Heart right ventricle (tissue), 16 donors: ENCODE measurements at regions of chr10 and their contacts with region 1.

Region 1: DNA sequence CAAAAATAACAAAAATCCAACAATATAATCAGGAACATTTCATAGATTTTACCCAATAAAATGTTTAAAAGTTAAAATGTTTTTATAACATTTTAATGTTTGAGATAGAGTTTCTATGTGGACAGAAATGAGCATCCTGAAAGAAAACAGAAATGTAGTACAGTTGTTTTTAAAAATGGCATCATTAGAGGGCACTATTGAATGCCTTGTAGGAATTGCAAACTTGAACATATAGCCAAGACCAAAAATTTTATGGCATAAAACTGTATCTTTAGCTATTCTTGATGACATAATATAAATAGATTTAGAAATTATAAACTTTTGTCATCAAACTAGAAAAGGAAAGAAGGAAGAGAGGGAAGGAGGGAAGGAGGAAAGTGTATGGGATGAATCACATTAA is 1372.7 kb downstream of the GATA3 start:
- DNase-seq: no peak
- ATAC-seq: no peak
- H3K4me3 ChIP-seq: no peak overlapping the region
- H3K27ac ChIP-seq: no peak overlapping the region
- H3K4me1 ChIP-seq: no peaks in the 10 kb centered on the region
- H3K27me3 ChIP-seq: no peaks in the 10 kb centered on the region
- CTCF ChIP-seq: peak in 3 of 9 donors; percentile 6 to 38 (median 25)

Region 2: GRCh38 chr10:9416331-9416730 is 10.9 kb before region 1 on chr10:
- intact Hi-C with region 1: loop called in 1 of 10 experiments (anchors 1 kb)
- DNase-seq: no peak
- ATAC-seq: no peak
- H3K4me3 ChIP-seq: no peak overlapping the region
- H3K27ac ChIP-seq: no peak overlapping the region
- H3K4me1 ChIP-seq: no peaks in the 10 kb centered on the region
- H3K27me3 ChIP-seq: no peaks in the 10 kb centered on the region
- CTCF ChIP-seq: no peak

Region 3: DNA sequence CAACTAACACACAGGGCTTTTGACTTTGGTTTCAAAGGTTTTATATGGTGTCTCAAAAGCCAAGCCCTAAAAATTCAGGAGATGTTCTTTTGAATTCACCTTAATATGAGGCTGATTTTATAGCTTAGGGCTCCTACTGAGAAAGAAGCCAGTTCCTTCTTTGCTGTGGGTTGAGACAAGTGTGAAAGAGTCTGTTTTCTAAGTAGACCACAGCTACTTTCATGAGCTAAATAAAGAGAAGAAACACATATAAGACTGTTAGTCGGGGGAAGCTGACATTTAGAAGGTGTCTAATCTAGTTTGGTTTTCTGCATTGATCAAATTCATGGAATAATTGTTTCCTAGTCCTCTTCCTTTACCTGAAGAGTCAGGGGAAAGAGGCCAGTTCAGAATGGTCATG is 1258.4 kb after region 1 on chr10:
- intact Hi-C with region 1: no loop called
- DNase-seq: no peak
- ATAC-seq: no peak
- H3K4me3 ChIP-seq: no peak overlapping the region
- H3K27ac ChIP-seq: no peak overlapping the region
- H3K4me1 ChIP-seq: no peaks in the 10 kb centered on the region
- H3K27me3 ChIP-seq: no peaks in the 10 kb centered on the region
- CTCF ChIP-seq: no peak